Activated CD4-positive, alpha-beta T cell treated with anti-CD3 and anti-CD28 coated beads for 36 hours (primary cell): ENCODE measurements at regions of chr12 and their contacts with region 1.

Region 1: DNA sequence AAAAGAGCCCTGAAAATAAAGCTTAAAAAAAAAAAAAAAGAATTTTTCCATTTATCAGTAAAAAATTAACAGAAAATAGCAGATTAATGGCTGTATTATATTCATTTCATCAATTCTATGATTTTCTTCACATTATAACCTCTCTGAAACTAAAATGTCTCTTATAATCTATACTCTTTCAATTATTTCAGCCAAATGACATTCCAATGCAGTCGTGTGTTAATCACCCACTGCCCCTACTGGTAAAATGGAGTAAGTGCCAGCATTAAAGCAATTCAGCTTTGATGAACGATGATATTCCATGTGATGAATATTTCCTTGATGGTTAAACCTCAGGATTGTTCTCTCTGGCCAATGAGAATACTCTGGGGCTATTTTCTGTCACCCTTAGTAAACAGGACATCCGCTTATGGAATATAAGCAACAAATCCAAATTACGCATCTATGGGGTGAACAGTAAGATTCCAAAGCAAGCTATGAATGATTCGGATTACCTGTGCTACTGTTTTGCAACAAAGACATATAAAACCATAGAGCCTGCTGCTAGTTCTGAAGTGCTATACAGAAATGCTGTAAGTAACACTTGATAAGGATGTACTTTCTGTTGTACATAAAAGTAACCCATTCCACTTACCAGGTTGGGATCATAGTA is 20.3 kb upstream of the SYCP3 start:
- DNase-seq: no peak
- ATAC-seq: no peak
- H3K4me3 Mint-ChIP-seq: no peak overlapping the region
- H3K27ac Mint-ChIP-seq: no peak overlapping the region
- H3K4me1 Mint-ChIP-seq: no peaks in the 10 kb centered on the region
- H3K27me3 Mint-ChIP-seq: no peaks in the 10 kb centered on the region

Region 2: DNA sequence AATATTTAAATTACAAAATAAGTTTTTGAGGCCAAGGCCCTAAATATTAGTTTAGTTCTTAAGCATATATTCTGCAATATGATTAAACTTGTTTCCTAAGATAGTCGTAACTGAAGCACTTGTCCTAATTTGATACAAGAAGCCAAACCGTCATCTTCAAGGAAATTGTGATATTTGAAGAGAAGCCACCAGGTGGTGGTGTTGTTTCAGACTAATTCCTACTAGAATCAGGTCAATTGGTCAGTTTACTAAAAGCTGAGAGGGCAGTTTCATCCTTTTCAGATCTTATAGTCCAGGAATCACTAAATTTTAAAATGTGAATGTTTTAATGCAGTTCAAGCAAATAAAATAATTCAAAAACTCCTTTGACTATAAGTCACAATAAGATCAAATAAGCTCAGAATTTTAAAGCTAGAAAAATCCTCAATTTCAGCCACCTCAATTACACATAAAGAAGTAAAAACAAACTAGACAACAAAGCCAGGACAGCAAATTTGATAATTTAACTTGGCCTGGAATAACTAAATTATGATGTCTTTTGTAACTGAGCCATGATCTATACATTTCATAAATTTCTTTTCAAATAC is 344.9 kb before region 1 on chr12:
- CTCF ChIA-PET with region 1: interaction called, 16 read pairs
- POLR2A ChIA-PET with region 1: no interaction called
- intact Hi-C with region 1: loop called (anchors 1 to 2 kb)
- DNase-seq: peak; percentile 16
- ATAC-seq: no peak
- H3K4me3 Mint-ChIP-seq: no peak overlapping the region
- H3K27ac Mint-ChIP-seq: no peak overlapping the region
- H3K4me1 Mint-ChIP-seq: no peaks in the 10 kb centered on the region
- H3K27me3 Mint-ChIP-seq: no peaks in the 10 kb centered on the region

Region 3: GRCh38 chr12:101490286-101490920 is 269.1 kb before region 1 on chr12:
- CTCF ChIA-PET with region 1: interaction called, 4 read pairs
- POLR2A ChIA-PET with region 1: no interaction called
- intact Hi-C with region 1: loop called (anchors 1 to 5 kb)
- DNase-seq: peak; percentile 48
- ATAC-seq: peak; percentile 64
- H3K4me3 Mint-ChIP-seq: no peak overlapping the region
- H3K27ac Mint-ChIP-seq: no peak overlapping the region
- H3K4me1 Mint-ChIP-seq: no peaks in the 10 kb centered on the region
- H3K27me3 Mint-ChIP-seq: peaks cover 11% of the 10 kb centered on the region

Region 4: DNA sequence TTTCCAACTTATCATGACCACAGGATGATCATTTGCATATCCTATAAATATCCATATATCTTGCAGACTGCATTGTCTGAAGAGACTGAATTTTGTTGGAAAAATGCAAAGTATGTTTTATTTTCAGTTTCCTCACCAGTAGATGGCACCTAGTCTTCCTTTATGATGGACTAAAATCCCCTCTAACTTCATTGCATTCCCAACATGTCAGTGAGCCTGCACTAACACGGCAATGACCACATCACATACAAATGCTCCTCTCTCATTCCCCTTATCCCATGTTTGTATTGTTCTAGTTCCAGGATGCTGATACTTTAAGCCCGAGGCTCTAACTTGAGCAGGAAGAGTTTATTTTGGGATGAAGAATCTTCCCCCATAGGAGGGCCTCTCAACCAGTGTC is 189.5 kb before region 1 on chr12:
- CTCF ChIA-PET with region 1: interaction called, 3 read pairs
- POLR2A ChIA-PET with region 1: no interaction called
- intact Hi-C with region 1: loop called in 1 of 2 experiments (anchors 5 kb)
- DNase-seq: no peak
- ATAC-seq: no peak
- H3K4me3 Mint-ChIP-seq: no peak overlapping the region
- H3K27ac Mint-ChIP-seq: no peak overlapping the region
- H3K4me1 Mint-ChIP-seq: peaks cover 16% of the 10 kb centered on the region
- H3K27me3 Mint-ChIP-seq: peaks cover 7% of the 10 kb centered on the region

Region 5: GRCh38 chr12:101670007-101670687 is 89.4 kb before region 1 on chr12:
- CTCF ChIA-PET with region 1: no interaction called
- POLR2A ChIA-PET with region 1: no interaction called
- intact Hi-C with region 1: loop called in 1 of 2 experiments (anchors 1 kb)
- DNase-seq: peak; percentile 64
- ATAC-seq: peak; percentile 73
- H3K4me3 Mint-ChIP-seq: no peak overlapping the region
- H3K27ac Mint-ChIP-seq: no peak overlapping the region
- H3K4me1 Mint-ChIP-seq: peaks cover 20% of the 10 kb centered on the region
- H3K27me3 Mint-ChIP-seq: peaks cover 5% of the 10 kb centered on the region

Region 6: DNA sequence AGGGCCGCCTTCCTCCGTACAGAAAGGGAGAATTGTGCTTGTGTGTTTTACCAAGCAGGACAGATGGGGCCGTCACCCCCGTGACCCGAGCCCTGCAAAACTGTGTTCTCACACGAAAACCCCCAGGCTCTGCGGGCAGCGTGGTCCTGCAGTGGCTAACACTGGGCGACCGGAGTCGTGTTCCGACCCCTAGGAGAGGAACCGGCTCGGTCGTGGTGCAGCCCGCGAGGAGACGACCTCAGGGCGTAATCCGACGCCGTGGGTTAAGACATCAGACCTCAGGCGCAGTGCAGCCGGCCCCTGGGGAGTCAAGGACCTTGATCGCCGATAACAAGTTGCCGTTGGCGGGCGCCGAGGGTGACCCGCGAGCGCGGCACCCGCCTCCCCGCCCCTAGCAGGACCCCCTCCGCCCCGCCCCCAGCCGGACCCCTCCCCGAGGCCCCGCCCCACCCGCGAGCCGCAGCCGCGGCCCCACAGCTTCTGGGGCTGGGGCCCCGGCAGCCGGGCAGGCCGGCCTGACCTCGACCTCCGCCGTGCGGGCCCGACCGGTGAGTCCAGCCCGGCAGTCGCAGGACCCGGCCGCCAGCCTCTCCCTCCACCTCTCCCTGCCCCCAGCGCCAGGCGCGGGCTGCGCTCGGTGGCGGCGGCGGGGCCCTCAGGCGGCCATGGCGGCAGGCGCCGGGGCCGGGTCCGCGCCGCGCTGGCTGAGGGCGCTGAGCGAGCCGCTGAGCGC is 62.2 kb before region 1 on chr12 and contains the start of gene CHPT1:
- CTCF ChIA-PET with region 1: interaction called, 3 read pairs
- POLR2A ChIA-PET with region 1: interaction called, 10 read pairs
- intact Hi-C with region 1: no loop called
- DNase-seq: peak; percentile 76
- ATAC-seq: peak; percentile 74
- H3K4me3 Mint-ChIP-seq: peak within 1 kb of the TSS; percentile 81
- H3K27ac Mint-ChIP-seq: peak within 1 kb of the TSS; percentile 83
- H3K4me1 Mint-ChIP-seq: peaks cover 29% of the 10 kb centered on the region
- H3K27me3 Mint-ChIP-seq: no peaks in the 10 kb centered on the region
- total RNA-seq, gene CHPT1: 12.2 to 15.2 TPM

Region 7: DNA sequence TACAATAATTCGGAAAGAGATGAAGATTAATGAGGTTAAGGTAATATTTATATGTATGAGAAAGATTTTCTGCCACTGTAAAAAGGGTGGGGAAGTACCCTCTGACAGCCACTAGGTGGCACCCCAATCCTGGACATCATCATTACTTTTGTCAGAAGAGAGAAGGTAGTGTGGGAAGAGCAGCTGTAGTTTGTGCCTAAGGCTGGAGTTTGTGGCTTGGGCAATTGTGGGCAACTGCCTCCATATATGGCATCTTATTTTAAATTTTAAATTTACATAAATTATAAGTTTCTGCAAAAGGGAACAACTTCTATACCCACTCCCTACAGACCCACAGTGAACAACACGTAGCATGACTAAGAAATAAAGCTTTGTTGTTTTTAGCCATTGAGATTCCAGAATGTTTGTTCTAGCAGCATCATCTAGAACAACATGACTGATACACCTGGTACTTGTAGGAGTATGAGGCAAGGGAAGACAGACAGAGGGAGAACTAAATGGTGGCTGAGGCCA is 14.2 kb after region 1 on chr12:
- CTCF ChIA-PET with region 1: interaction called, 18 read pairs
- POLR2A ChIA-PET with region 1: no interaction called
- intact Hi-C with region 1: no loop called
- DNase-seq: peak; percentile 78
- ATAC-seq: peak; percentile 87
- H3K4me3 Mint-ChIP-seq: no peak overlapping the region
- H3K27ac Mint-ChIP-seq: peak overlapping the region; percentile 65
- H3K4me1 Mint-ChIP-seq: peaks cover 9% of the 10 kb centered on the region
- H3K27me3 Mint-ChIP-seq: no peaks in the 10 kb centered on the region